Activated CD4-positive, alpha-beta memory T cell treated with anti-CD3 and anti-CD28 coated beads for 36 hours (primary cell): ENCODE measurements at regions of chr21 and their contacts with region 1.

Region 1: DNA sequence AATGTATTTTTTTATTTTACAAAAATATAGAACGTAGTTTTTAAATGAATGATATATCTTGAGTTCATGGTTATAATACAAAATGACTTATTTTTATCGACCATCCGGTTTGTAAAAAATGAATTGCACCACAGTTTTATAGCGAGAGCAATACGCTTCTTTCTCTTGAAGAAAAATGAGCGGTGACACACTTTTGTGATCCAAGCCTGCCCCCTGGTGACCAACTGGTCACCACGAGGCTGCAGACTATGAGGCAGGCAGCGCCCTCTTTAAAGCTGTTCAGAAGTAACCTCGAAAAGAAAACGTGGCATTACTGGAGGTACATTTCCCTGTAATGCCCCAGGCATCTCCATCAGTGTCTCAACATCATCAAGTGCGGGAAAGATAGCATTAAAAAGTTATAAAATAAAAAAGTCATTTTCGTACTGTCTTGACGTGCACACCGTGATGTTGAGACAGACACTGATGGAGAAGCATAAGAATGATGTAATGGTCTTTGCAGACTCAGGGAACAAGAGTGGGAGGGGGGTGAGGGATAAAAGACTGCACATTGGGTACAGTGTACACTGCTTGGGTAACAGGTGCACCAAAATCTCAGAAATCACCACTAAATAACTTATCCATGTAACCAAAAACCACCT is 734.2 kb upstream of the ADAMTS5 start:
- DNase-seq: peak; percentile 73
- H3K4me3 Mint-ChIP-seq: no peak overlapping the region
- H3K27ac Mint-ChIP-seq: no peak overlapping the region
- H3K4me1 Mint-ChIP-seq: no peaks in the 10 kb centered on the region
- H3K27me3 Mint-ChIP-seq: no peaks in the 10 kb centered on the region

Region 2: DNA sequence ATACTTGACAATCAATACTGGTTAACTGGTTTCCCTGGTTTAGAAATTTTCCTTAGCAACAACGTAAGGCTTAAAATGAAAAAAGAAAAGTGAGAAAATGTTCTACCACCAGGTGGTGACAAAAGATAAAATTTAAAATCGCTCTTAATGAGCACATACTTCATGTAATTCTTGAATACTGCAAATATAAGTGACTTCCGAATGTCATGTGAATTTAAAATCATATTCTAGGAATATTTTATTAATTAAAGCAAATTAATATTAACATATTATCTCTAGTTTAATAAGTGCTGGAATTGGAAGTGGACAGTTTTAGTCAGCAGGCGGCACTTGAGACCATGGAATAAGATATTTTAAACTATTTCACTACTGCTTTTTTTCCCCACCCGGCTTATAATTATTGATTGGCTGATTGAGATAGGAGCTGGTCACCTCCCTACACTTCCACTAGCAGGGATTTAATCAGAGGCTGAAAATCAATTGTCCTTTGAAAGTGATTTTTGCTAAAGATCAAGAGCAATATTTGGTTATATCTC is 850.9 kb before region 1 on chr21:
- CTCF ChIA-PET with region 1: interaction called, 11 read pairs
- POLR2A ChIA-PET with region 1: no interaction called
- intact Hi-C with region 1: loop called (anchors 1 kb)
- DNase-seq: no peak
- H3K4me3 Mint-ChIP-seq: no peak overlapping the region
- H3K27ac Mint-ChIP-seq: no peak overlapping the region
- H3K4me1 Mint-ChIP-seq: peaks cover 19% of the 10 kb centered on the region
- H3K27me3 Mint-ChIP-seq: peaks cover 37% of the 10 kb centered on the region